ENCODE measurements at regions of chr3 and their contacts with region 1.

Region 1: GRCh38 chr3:152071924-152072323 is 196.8 kb upstream of the MBNL1 start:
- DNase-seq: peak; percentile 64
- ATAC-seq: peak; percentile 65
- H3K4me3 ChIP-seq: no peak overlapping the region
- H3K27ac ChIP-seq: no peak overlapping the region
- H3K4me1 ChIP-seq: peaks cover 5% of the 10 kb centered on the region; the same call in 1 of the 2 replicates
- H3K27me3 ChIP-seq: no peaks in the 10 kb centered on the region
- CTCF ChIP-seq: peak; percentile 83

Region 2: GRCh38 chr3:152121292-152121654 is 49.3 kb after region 1 on chr3:
- CTCF ChIA-PET with region 1: interaction called, 3 read pairs
- POLR2A ChIA-PET with region 1: interaction called, 3 read pairs
- intact Hi-C with region 1: loop called (anchors 5 kb)
- DNase-seq: peak; percentile 91
- ATAC-seq: peak; percentile 91
- H3K4me3 ChIP-seq: no peak overlapping the region
- H3K27ac ChIP-seq: peak overlapping the region; percentile 65
- H3K4me1 ChIP-seq: peaks cover 27% of the 10 kb centered on the region
- H3K27me3 ChIP-seq: no peaks in the 10 kb centered on the region
- CTCF ChIP-seq: no peak

Region 3: DNA sequence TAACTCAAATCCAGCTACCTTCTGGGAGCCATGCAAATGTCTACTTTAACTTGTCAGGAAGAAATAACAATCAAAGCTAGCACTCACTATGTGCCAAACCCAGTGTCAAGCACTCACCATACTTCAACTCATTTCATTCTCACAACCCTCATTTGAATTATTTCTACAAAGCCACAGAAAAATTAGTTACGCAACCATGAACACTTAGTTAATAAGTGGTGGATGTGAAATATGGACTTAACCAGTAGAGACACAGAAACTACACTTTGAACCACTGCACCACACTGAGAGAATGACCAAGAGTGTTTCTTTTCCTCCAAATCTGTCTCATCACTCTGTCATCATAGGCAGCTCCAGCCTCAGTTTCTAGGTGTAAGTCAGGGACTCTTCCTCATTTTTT is 105.8 kb after region 1 on chr3:
- CTCF ChIA-PET with region 1: no interaction called
- POLR2A ChIA-PET with region 1: interaction called, 3 read pairs
- intact Hi-C with region 1: loop called (anchors 5 kb)
- DNase-seq: no peak
- ATAC-seq: no peak
- H3K4me3 ChIP-seq: no peak overlapping the region
- H3K27ac ChIP-seq: no peak overlapping the region
- H3K4me1 ChIP-seq: peaks cover 28% of the 10 kb centered on the region
- H3K27me3 ChIP-seq: no peaks in the 10 kb centered on the region
- CTCF ChIP-seq: no peak

Region 4: DNA sequence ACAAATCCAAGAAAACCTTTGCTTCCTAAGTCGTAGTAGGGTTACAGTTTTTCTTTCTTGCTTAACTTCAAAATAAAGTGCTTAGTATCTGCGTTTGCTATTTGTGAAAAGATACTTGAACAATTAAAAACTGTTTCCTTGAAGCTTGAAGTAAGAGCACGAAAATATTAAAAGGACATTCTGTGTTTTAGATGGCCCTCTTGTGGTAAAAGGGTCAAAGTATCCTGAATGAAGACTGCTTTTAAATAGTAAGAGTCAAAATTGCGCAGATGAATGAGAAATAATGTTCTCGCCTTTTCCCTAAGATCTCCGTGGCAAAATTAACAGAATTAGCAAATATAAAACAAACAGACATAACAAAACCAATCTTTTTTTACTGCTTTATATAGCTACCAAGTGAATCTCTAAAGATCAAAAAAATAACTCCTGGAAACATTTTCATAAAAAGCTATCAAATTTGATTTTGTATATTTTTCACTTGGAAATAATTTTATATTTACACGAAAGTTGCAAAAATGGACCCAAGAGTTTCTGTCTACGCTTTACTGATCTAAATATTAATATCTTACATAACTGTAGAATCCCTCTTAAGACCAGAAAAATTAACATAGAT is 372.2 kb after region 1 on chr3:
- CTCF ChIA-PET with region 1: interaction called, 3 read pairs
- POLR2A ChIA-PET with region 1: no interaction called
- intact Hi-C with region 1: loop called (anchors 1 kb)
- DNase-seq: peak; percentile 78
- ATAC-seq: peak; percentile 45
- H3K4me3 ChIP-seq: no peak overlapping the region
- H3K27ac ChIP-seq: 0 out of 2 replicates have a peak overlapping the region, but pooled peaks have one; percentile 0
- H3K4me1 ChIP-seq: peaks cover 22% of the 10 kb centered on the region; the same call in 1 of the 2 replicates
- H3K27me3 ChIP-seq: no peaks in the 10 kb centered on the region
- CTCF ChIP-seq: peak; percentile 90

Region 5: DNA sequence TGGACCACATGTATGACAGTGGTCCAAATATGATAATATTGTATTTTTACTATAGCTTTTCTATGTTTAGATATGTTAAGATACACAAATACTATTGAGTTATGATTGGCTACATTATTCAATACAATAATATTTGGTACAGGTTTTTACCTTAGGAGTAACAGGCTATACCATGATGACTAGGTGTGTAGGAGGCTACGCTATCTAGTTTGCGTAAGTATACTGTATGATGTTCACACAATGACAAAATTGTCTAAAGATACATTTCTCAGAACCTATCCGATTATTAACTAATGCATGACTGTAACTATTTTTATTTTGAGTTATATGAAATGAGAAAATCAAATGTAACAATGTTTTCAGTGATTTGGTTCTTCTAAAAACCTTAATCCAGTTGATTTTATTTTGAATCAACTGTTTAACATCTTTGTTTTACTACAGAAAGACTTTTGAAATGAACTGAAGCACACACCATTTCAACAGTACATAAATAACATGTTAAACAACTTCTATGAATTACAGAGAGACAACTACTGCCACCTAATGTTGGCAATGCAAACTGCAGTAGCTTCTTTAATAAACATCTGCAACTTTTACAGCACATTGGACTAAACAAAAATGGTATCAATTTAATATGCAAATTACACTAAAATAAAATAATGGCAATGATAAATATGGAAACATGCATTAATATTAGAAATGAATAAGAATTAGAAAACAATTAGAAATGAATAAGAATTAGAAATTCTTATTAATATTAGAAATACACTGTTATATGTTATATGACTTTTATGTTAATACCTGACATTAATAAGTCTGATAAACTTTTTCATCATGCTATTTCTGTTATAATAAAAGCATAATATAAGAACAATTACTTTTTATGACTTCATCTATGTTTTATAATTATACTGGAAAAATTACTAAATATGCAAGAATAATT is 452.5 kb after region 1 on chr3:
- CTCF ChIA-PET with region 1: no interaction called
- POLR2A ChIA-PET with region 1: no interaction called
- intact Hi-C with region 1: loop called (anchors 5 kb)
- DNase-seq: peak; percentile 80
- ATAC-seq: peak; percentile 51; the same call in 1 of the 2 replicates
- H3K4me3 ChIP-seq: no peak overlapping the region
- H3K27ac ChIP-seq: no peak overlapping the region
- H3K4me1 ChIP-seq: no peaks in the 10 kb centered on the region
- H3K27me3 ChIP-seq: no peaks in the 10 kb centered on the region
- CTCF ChIP-seq: peak; percentile 89